ENCODE measurements at regions of chr17 and their contacts with region 1.

Region 1: GRCh38 chr17:35764123-35764991 is 3.7 kb downstream of the C17orf50 start:
- DNase-seq: peak; percentile 77 to 91 (median 83)
- H3K4me3 ChIP-seq: peak overlapping the region; percentile 38
- H3K27ac ChIP-seq: no peak overlapping the region
- H3K4me1 ChIP-seq: peaks cover 3% of the 10 kb centered on the region
- H3K27me3 ChIP-seq: no peaks in the 10 kb centered on the region
- CTCF ChIP-seq: peak; percentile 85 to 91 (median 91)
- EP300 ChIP-seq: no peak
- POLR2A ChIP-seq: no peak

Region 2: DNA sequence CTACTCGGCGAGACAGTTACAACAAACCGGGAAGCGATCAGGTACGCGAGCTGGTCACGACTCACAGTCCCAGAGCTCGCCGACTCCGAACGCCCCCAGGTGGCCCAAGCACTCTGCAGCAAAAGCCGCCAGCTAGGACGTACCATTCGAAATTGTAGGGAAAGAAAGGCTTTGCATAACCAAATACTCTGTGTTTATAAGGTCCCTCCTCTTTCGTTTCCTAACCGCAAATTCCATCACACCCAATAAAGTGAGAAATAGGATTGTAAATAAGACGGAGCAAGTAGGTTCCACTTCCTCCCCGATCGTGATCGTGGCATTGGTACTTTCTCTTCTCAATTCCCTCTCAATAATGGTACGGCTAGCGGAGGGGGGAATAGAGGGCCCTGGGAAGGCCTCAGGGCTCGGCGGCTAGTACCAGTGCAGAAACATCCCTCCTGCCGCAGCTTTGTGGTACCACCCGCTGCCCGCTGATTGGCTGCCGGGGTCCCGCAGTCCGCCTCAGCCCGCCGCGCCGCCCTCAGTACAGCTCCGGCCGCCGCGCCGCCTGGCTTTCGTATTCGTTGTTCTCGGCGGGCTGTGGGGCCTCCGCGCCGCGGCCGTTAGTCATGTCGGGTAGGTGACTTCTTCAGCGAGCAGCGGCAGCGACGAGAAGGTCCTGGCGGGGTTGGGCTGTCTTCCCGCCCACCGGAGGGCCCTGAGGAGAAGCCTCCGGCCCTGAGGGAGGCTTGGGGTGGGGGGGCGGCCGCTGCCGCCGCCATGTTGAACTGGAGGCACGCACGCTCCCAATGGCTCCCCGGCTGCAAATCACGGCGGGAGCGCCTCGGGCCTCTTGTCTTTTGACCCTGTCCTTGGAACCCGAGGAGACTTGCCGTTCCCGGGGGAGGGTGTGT is 44.9 kb after region 1 on chr17 and contains the start of gene TAF15:
- intact Hi-C with region 1: loop called (anchors 2 to 5 kb)
- DNase-seq: peak; percentile 94 to 95 (median 94)
- H3K4me3 ChIP-seq: peak within 1 kb of the TSS; percentile 96
- H3K27ac ChIP-seq: peak within 1 kb of the TSS; percentile 84 to 89
- H3K4me1 ChIP-seq: peaks cover 4% of the 10 kb centered on the region
- H3K27me3 ChIP-seq: no peaks in the 10 kb centered on the region
- CTCF ChIP-seq: peak; percentile 21 to 68 (median 60)
- EP300 ChIP-seq: no peak
- POLR2A ChIP-seq: peak; percentile 99
- total RNA-seq, gene TAF15: 30.2 to 162 (median 126) TPM